ENCODE measurements at regions of chr17 and their contacts with region 1.

Region 1: DNA sequence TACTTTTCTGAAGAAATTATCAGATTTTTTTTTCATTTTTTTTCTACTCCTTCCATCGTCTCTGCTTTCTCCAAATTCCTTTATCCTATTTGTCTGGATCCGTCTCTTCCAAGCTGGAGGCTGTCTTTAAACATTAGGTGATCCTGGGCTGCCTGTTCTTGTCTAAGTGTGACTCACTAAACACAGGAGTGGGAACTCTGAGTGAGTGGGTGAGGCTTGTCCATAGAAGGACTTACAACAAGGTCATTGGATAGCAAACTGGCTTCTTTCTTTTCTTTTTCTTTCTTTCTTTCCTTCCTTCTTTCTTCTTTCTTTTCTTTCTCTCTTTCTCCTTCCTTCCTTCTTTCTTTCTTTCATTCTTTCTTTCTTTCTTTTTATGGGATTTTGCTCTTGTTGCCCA is 18.2 kb downstream of the ALOX15 start:
- DNase-seq: no peak
- H3K4me3 ChIP-seq: no peak overlapping the region
- H3K27ac ChIP-seq: no peak overlapping the region
- H3K4me1 ChIP-seq: peaks cover 4 to 11% (median 9%) of the 10 kb centered on the region in 4 donors
- H3K27me3 ChIP-seq: peaks cover 0 to 3% (median 0%) of the 10 kb centered on the region in 3 donors
- CTCF ChIP-seq: no peak
- EP300 ChIP-seq: no peak
- POLR2A ChIP-seq: no peak

Region 2: DNA sequence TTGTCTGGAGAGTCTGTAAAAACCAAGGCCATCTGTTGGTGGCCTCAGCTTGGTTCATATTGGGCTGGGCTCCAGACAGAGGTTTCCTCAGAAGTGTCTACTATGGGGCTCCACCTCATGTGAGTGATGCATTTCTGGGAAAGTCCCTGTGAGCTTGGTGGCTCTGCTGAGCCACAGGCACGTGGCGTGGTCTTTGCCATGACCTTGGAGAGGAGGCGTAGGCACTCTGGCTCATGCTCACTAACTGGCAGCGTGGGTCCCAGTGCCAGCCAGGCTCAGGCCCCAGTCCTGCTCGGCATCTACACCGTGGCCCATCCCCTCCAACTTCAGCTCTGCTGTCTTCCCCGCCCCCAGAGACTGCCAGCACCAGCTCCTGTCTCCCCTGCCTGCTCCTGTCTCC is 49.6 kb before region 1 on chr17:
- intact Hi-C with region 1: loop called (anchors 5 kb)
- DNase-seq: no peak
- H3K4me3 ChIP-seq: no peak overlapping the region
- H3K27ac ChIP-seq: no peak overlapping the region
- H3K4me1 ChIP-seq: no peaks in the 10 kb centered on the region
- H3K27me3 ChIP-seq: peaks cover 0 to 6% (median 0%) of the 10 kb centered on the region in 3 donors
- CTCF ChIP-seq: no peak
- EP300 ChIP-seq: no peak
- POLR2A ChIP-seq: no peak

Region 3: GRCh38 chr17:4678427-4679026 is 55.3 kb after region 1 on chr17:
- intact Hi-C with region 1: no loop called
- DNase-seq: no peak
- H3K4me3 ChIP-seq: no peak overlapping the region
- H3K27ac ChIP-seq: no peak overlapping the region
- H3K4me1 ChIP-seq: no peaks in the 10 kb centered on the region
- H3K27me3 ChIP-seq: no peaks in the 10 kb centered on the region
- CTCF ChIP-seq: no peak
- EP300 ChIP-seq: no peak
- POLR2A ChIP-seq: no peak

Measured in stomach (tissue), 19 donors.